ENCODE measurements at regions of chr1 and their contacts with region 1.

Region 1: DNA sequence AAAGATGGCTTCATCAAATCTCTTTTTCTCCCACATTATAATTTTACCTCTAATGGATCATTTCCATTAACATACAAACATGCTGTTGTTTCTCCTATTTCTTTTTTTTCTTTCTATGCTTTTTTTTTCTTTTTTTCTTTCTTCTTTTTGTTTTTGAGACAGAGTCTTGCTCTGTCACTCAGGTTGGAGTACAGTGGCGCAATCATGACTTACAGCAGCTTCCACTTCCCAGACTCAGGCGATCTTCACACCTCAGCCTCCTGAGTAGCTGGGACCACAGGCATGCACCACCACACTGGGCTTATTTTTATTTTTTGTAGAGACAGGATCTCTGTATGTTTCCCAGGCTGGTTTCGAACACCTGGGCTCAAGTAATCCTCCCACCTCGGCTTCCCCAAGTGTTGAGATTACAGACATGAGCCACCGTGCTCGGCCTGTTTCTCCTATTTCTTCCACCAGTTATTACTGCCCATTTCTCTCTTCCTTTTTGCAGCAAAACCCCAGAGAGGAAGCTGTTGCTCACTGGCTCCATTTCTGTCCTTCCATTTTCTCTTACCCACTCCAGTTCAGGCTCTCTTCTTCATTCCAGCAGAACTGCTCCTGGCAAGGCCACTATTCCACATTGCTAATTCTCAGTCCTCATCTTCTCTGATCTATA is 32.1 kb upstream of the OPRD1 start:
- DNase-seq: no peak
- H3K4me3 Mint-ChIP-seq: no peak overlapping the region
- H3K27ac Mint-ChIP-seq: no peak overlapping the region
- H3K4me1 Mint-ChIP-seq: peaks cover 1% of the 10 kb centered on the region
- H3K27me3 Mint-ChIP-seq: no peaks in the 10 kb centered on the region
- CTCF ChIP-seq: no peak

Region 2: GRCh38 chr1:28790377-28791351 is 10.8 kb after region 1 on chr1:
- CTCF ChIA-PET with region 1: no interaction called
- intact Hi-C with region 1: no loop called
- DNase-seq: no peak
- H3K4me3 Mint-ChIP-seq: no peak overlapping the region
- H3K27ac Mint-ChIP-seq: no peak overlapping the region
- H3K4me1 Mint-ChIP-seq: peaks cover 2% of the 10 kb centered on the region
- H3K27me3 Mint-ChIP-seq: peaks cover 59% of the 10 kb centered on the region
- CTCF ChIP-seq: no peak

Region 3: GRCh38 chr1:29202584-29203340 is 422.9 kb after region 1 on chr1:
- CTCF ChIA-PET with region 1: no interaction called
- intact Hi-C with region 1: loop called (anchors 10 kb)
- DNase-seq: peak; percentile 96
- H3K4me3 Mint-ChIP-seq: peak overlapping the region; percentile 19
- H3K27ac Mint-ChIP-seq: no peak overlapping the region
- H3K4me1 Mint-ChIP-seq: peaks cover 19% of the 10 kb centered on the region
- H3K27me3 Mint-ChIP-seq: no peaks in the 10 kb centered on the region
- CTCF ChIP-seq: peak; percentile 90